Dorsolateral prefrontal cortex (tissue), 120 donors: ENCODE measurements at regions of chr2 and their contacts with region 1.

Region 1: GRCh38 chr2:17753803-17754663 is at the starts of genes GEN1 and SMC6:
- DNase-seq: peak; percentile 88 to 92 (median 88)
- H3K4me3 ChIP-seq: peak within 1 kb of the TSS; percentile 66 to 100 (median 95)
- H3K27ac ChIP-seq: peak within 1 kb of the TSS; percentile 93 to 100 (median 99)
- H3K27me3 ChIP-seq: no peaks in the 10 kb centered on the region
- CTCF ChIP-seq: peak in 17 of 56 donors; percentile 4 to 39 (median 17)
- total RNA-seq, gene GEN1: 2.6 to 17.6 (median 6.4) TPM
- total RNA-seq, gene SMC6: 13.7 to 31.3 (median 22.0) TPM

Region 2: DNA sequence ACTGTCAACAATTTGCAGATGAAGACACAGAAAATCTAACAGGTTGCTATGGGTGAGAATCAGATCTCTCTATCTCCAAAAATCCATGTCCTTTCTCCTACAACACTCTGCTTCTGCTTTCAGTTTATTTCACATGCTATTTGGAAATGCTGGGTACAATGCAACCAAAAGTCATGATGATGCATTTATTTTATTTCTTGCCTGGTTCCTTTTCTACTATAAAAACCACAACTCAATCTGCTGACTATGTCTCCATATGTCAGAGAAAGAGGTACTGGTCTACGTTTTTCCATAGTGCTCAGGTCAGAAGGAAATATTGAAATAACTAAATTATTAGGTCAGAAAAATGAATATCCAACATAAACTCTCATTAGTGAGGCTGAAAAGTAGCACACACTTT is 256.3 kb before region 1 on chr2:
- intact Hi-C with region 1: no loop called
- DNase-seq: no peak
- H3K4me3 ChIP-seq: no peak overlapping the region
- H3K27ac ChIP-seq: no peak overlapping the region
- H3K27me3 ChIP-seq: peaks cover 0 to 11% (median 0%) of the 10 kb centered on the region in 45 donors
- CTCF ChIP-seq: no peak

Region 3: DNA sequence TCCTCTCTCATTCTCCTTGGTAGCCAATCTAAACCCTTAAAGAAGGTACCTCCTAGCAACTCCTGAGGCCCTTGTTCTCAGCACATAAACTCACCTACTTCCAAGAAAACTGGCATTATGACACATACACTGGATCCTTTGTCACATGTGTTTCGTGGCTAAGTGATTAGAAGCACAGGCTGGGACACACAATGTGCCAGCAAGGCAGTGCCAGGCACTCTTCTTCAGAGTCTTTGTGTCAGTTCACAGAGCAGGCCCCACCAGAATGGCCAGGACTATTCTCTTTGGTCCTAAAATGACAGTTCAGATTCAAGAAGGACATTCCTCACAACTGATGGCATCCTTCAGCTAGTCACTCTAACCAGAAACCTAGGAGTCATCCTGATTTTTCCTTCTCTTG is 40.7 kb before region 1 on chr2:
- intact Hi-C with region 1: loop called in 1 of 2 experiments (anchors 5 kb)
- DNase-seq: peak in 4 of 10 donors; percentile 10 to 53 (median 44)
- H3K4me3 ChIP-seq: peak overlapping the region in 1 of 59 donors; percentile 12
- H3K27ac ChIP-seq: peak overlapping the region in 52 of 59 donors; percentile 3 to 89 (median 69)
- H3K27me3 ChIP-seq: no peaks in the 10 kb centered on the region
- CTCF ChIP-seq: no peak

Region 4: GRCh38 chr2:18055290-18055689 is 301.3 kb after region 1 on chr2:
- intact Hi-C with region 1: no loop called
- DNase-seq: no peak
- H3K4me3 ChIP-seq: no peak overlapping the region
- H3K27ac ChIP-seq: no peak overlapping the region
- H3K27me3 ChIP-seq: no peaks in the 10 kb centered on the region
- CTCF ChIP-seq: no peak